ENCODE measurements at regions of chr11 and their contacts with region 1.

Region 1: GRCh38 chr11:44286268-44286880 is 23.6 kb downstream of the ALX4 start:
- DNase-seq: peak; percentile 69
- H3K4me3 Mint-ChIP-seq: no peak overlapping the region
- H3K27ac Mint-ChIP-seq: no peak overlapping the region
- H3K4me1 Mint-ChIP-seq: peaks cover 10% of the 10 kb centered on the region
- H3K27me3 Mint-ChIP-seq: peaks cover 15% of the 10 kb centered on the region
- CTCF ChIP-seq: peak; percentile 95

Region 2: DNA sequence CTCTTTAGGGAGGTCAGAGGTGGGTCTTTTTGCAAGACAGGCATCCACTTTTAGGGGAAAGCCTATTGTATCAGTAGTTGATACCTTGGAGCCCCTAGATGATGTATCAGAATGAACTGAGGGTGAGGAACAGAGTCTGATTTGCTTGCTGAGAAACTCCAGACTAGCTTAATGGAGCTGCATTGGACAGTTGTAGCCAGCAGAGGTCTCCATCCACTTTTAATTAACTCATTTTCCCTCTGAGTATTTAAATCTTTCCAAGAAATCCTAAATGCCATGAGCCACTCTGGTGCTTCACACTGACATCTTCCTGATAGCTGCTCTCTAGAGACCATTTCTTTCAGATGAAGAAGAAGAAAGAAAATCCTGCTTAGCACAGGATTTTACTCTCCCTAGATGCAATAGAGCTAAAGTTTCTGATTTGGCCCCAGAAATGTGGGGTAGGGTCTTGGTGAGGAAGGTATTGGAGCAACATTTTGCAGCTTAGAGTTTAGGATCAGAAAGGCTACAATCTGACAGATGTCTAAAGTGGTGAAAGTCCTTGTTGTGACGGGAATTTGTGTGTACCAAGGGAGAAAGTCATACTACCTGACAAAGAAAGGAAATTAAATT is 152.9 kb before region 1 on chr11:
- CTCF ChIA-PET with region 1: interaction called, 9 read pairs
- POLR2A ChIA-PET with region 1: no interaction called
- intact Hi-C with region 1: loop called (anchors 2 kb)
- DNase-seq: peak; percentile 33
- H3K4me3 Mint-ChIP-seq: no peak overlapping the region
- H3K27ac Mint-ChIP-seq: no peak overlapping the region
- H3K4me1 Mint-ChIP-seq: peaks cover 6% of the 10 kb centered on the region
- H3K27me3 Mint-ChIP-seq: no peaks in the 10 kb centered on the region
- CTCF ChIP-seq: peak; percentile 41

Region 3: DNA sequence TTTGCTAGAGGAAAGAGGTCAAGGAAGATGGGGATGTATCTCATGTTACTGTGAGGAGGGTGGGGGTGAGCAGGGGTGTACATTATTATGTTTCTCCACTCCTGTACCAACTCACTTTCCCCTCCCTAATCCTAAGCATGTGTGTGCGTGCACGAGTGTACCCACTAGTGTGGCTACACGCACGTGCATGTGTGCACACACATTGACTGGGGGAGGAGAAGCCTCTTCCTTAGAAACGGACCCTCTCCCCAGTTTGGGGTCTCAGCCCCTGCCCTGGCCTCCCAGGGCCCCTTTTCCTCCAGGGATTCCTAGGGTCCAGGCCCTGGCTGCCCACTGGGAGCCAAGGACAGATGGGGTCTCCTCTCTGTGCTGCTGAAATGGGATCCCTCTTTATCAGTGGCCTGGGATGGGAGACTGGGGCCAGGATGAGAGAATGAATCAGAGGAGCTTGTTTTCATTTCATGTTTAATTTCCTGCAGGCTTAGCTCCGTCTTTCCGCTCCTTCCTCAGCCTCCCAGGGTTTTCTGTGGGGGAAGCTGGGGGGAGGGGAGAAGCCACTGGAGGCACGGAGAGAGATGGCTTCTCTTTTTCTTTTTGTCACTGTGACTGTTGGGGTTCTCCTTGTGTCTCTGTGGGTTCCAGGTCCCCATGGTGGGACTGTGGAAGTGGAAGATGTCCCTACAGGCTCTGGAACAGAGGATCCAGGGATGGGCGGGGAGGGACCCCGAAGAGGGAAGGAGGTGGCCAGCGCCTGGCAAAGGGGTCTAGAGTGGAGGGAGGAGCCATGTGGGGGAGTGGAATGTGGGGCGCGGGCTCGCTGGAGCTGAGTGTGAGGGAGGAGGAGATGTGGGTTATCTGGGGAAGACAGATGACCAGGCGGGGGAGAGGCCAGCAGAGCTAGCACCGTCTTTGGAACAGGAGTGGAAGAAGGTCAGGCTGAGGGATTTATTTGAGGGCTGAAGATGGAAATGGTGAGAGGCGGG is 16.7 kb before region 1 on chr11:
- CTCF ChIA-PET with region 1: interaction called, 14 read pairs
- POLR2A ChIA-PET with region 1: interaction called, 3 read pairs
- intact Hi-C with region 1: no loop called
- DNase-seq: no peak
- H3K4me3 Mint-ChIP-seq: no peak overlapping the region
- H3K27ac Mint-ChIP-seq: no peak overlapping the region
- H3K4me1 Mint-ChIP-seq: no peaks in the 10 kb centered on the region
- H3K27me3 Mint-ChIP-seq: no peaks in the 10 kb centered on the region
- CTCF ChIP-seq: no peak

Region 4: GRCh38 chr11:44326615-44327475 is 40.5 kb after region 1 on chr11:
- CTCF ChIA-PET with region 1: interaction called, 6 read pairs
- POLR2A ChIA-PET with region 1: no interaction called
- intact Hi-C with region 1: loop called (anchors 1 kb)
- DNase-seq: peak; percentile 25
- H3K4me3 Mint-ChIP-seq: no peak overlapping the region
- H3K27ac Mint-ChIP-seq: no peak overlapping the region
- H3K4me1 Mint-ChIP-seq: no peaks in the 10 kb centered on the region
- H3K27me3 Mint-ChIP-seq: peaks cover 57% of the 10 kb centered on the region
- CTCF ChIP-seq: no peak

Region 5: GRCh38 chr11:44347538-44347937 is 61.2 kb after region 1 on chr11:
- CTCF ChIA-PET with region 1: no interaction called
- POLR2A ChIA-PET with region 1: no interaction called
- intact Hi-C with region 1: no loop called
- DNase-seq: no peak
- H3K4me3 Mint-ChIP-seq: no peak overlapping the region
- H3K27ac Mint-ChIP-seq: no peak overlapping the region
- H3K4me1 Mint-ChIP-seq: no peaks in the 10 kb centered on the region
- H3K27me3 Mint-ChIP-seq: no peaks in the 10 kb centered on the region
- CTCF ChIP-seq: no peak

Region 6: DNA sequence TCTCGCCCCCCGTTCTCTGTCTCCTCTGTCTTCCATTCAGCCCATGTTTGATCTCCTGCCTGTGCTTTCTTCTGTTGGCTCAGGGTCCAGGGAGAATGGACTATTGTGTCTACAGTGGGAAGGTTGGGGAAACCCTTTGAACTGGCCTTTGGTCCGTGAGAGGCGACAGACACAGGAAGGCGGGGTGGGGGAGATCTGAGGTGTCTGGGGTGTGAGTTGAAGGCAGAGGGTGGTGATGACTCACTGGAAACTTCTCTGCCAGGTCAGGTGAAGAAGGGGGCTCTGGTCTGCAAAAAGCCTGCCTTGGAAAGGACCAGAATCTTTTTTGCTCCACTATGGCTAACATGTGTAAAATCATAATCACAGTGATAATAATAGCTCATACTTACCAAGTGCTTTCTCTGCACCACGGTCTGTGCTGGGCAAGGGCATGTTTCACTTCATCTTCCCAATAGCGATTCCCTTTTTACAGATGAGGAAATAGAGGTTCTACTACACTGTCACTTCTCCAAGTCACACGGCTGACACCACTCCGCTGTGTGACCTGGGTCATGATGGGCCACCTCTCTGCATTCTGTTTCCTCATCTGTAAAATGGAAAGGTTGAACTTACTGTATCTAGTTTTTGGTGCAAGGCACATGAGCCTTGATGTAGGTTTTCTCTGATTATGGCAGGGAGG is 123.3 kb after region 1 on chr11:
- CTCF ChIA-PET with region 1: no interaction called
- POLR2A ChIA-PET with region 1: no interaction called
- intact Hi-C with region 1: no loop called
- DNase-seq: no peak
- H3K4me3 Mint-ChIP-seq: no peak overlapping the region
- H3K27ac Mint-ChIP-seq: no peak overlapping the region
- H3K4me1 Mint-ChIP-seq: no peaks in the 10 kb centered on the region
- H3K27me3 Mint-ChIP-seq: peaks cover 43% of the 10 kb centered on the region
- CTCF ChIP-seq: no peak

Region 7: DNA sequence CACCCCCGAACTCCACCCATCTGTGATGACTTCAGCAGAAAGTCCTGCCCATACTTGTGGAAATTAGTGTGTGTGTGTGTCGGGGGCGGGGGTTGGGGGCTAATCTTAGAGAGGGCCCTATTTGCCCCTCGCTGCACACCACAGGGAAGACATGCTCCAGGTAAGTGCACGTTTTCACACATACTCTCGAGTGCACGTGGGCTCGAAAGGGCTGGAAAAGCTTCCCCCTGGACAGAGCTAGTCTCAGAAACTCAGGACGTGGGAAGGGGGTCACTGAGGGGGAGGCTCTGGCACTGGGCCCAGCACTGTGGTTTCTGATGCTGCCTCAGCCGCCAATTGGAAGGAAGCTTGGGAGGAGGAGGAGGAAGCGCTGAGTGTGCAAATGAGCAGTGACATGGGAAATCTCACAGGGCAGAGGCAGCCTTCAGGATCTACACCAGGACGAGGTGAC is 238.4 kb after region 1 on chr11:
- CTCF ChIA-PET with region 1: interaction called, 15 read pairs
- POLR2A ChIA-PET with region 1: no interaction called
- intact Hi-C with region 1: no loop called
- DNase-seq: no peak
- H3K4me3 Mint-ChIP-seq: no peak overlapping the region
- H3K27ac Mint-ChIP-seq: no peak overlapping the region
- H3K4me1 Mint-ChIP-seq: peaks cover 6% of the 10 kb centered on the region
- H3K27me3 Mint-ChIP-seq: no peaks in the 10 kb centered on the region
- CTCF ChIP-seq: no peak

Region 8: DNA sequence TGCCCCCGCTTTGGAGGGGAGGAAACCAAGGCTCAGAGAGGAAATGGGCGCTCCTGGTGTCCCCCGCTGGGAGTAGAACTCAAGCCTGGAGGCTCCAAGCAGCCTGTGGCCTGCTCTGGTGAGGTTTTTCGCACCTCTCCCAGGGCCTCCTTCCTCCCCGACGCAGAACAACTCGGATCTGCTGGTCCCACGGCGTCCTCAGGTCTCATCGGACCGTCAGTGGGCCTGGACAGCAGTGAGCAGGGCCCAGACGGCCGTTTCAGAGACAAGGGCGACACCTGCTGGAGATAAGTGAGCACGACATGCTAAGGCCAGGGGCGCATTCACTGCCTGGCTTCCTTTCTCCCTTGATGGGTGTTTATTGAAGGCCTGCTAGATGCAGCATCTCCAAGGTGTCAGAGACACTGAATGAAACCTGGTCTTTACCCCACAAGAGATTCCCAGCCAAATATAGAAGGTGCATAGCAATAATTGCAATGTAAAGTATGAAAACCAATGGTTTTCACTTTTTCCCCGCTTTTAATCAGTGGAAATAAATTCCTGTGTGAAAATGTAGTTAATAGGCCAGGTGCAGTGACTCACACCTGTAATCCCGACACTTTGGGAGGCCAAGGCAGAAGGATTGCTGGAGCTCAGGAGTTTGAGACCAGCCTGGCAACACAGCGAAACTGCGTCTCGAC is 252.1 kb after region 1 on chr11:
- CTCF ChIA-PET with region 1: interaction called, 223 read pairs
- POLR2A ChIA-PET with region 1: interaction called, 5 read pairs
- intact Hi-C with region 1: loop called (anchors 1 kb)
- DNase-seq: peak; percentile 71
- H3K4me3 Mint-ChIP-seq: no peak overlapping the region
- H3K27ac Mint-ChIP-seq: no peak overlapping the region
- H3K4me1 Mint-ChIP-seq: no peaks in the 10 kb centered on the region
- H3K27me3 Mint-ChIP-seq: peaks cover 10% of the 10 kb centered on the region
- CTCF ChIP-seq: peak; percentile 93

Measured in MCF 10A (cell line).